Lower leg skin (tissue), 4 donors: ENCODE measurements at regions of chr13 and their contacts with region 1.

Region 1: DNA sequence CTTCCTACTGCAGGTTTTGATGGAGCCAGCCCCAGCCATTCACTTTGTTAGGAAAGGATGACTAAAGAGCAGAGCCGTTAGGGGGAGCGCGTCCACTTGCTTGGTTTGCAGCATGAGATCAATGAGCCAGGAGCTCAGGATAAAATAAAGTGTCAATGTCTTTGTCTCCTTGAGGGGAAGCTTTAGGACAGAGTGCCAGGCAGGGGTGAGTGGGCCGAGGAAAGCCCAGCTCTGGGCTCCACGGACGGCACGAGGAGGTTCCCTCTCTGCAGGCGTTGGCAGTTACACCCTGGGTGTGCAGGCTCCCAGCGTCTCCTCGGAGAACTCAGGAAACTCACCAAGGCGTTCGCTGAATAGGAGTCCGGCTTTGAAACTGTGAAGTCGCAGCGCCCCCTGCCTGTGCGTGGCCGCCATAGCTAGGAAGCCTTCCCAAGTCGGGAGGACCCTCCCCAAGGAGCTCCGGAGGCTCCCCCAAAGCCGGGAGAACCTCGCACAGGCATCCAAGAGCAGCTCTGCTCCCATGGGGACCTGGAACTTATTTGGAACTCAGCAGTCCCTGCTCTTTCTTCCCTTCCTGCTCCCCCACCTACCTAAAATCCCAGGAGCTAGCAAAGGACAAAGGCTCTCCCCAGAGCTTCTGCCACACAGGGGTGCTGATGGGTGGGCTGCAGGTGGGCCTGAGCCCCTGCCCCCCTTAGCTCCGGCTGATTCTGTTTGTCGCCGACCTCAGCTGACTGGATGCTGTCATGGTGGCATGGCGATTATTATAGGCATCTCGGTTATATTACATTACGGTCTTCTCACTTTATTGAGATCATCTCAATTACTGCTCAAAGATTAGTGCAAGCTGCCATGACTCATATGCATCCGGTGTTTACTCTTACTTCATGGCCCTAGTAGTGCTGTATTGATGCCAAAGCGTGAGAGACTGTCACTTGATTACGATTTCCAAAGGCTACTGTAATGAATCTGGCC is 34.4 kb downstream of the GSX1 start:
- DNase-seq: peak; percentile 73 to 96
- H3K4me3 ChIP-seq: no peak overlapping the region
- CTCF ChIP-seq: peak in 2 of 3 donors; percentile 74 to 84
- POLR2A ChIP-seq: no peak

Region 2: GRCh38 chr13:27182844-27183497 is 643.7 kb before region 1 on chr13:
- intact Hi-C with region 1: no loop called
- DNase-seq: peak in 1 of 2 donors; percentile 48
- H3K4me3 ChIP-seq: no peak overlapping the region
- CTCF ChIP-seq: no peak
- POLR2A ChIP-seq: no peak

Region 3: DNA sequence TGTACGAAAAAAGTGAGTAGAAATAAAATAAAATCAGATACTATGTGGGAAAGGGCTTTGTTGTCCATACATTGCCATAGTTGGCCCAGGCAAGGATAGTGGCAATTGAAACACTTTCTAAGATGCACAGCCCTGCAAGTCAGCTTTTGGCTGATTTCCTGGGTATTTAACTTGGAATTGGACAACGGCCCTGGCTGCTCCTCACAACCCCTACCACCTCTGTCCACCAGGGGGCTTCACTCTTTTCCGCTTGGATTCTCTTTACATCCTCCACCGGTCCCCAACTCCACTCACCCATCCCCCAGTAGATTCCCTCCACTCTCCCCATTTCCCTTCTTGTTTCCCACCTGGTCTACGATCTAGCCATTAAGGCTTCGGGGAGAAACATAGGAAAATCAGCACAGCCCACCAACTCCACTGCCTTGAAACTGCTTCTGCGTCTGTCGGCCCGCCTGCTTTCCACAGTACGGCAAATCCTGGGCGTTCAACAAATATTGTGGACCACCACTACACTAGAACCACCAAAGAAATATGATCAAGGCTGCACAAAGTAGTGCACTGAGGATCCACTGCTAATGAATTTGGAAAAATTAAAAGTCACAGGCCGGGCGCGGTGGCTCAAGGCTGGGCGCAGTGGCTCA is 450.9 kb before region 1 on chr13:
- intact Hi-C with region 1: loop called (anchors 2 kb)
- DNase-seq: peak in 1 of 2 donors; percentile 91
- H3K4me3 ChIP-seq: no peak overlapping the region
- CTCF ChIP-seq: no peak
- POLR2A ChIP-seq: no peak

Region 4: DNA sequence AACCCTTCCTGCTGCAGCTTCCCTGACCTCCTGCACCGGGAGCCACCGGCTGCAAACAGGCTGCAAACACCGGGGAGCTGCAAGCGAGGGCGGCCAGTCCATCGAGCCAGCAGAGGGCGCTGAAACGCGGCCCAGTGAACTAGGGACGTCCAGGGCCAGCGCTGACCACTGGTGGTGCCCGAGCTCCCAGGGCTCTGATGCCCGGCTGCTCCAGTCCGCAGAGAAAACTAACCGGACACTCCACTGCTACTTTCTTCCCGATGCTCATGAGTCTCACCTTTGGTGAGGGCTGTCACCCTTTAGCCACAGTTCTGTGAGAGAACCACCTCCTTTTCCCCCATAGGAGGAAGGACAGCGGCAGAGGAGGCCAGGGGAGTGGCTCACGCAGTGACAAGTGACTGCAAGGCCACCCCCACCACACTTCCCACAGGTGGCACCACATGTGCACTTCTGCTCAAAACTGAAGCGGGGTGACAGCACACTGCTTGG is 293.5 kb before region 1 on chr13:
- intact Hi-C with region 1: loop called (anchors 5 kb)
- DNase-seq: peak; percentile 44 to 95
- H3K4me3 ChIP-seq: no peak overlapping the region
- CTCF ChIP-seq: peak in 1 of 3 donors; percentile 14
- POLR2A ChIP-seq: no peak

Region 5: DNA sequence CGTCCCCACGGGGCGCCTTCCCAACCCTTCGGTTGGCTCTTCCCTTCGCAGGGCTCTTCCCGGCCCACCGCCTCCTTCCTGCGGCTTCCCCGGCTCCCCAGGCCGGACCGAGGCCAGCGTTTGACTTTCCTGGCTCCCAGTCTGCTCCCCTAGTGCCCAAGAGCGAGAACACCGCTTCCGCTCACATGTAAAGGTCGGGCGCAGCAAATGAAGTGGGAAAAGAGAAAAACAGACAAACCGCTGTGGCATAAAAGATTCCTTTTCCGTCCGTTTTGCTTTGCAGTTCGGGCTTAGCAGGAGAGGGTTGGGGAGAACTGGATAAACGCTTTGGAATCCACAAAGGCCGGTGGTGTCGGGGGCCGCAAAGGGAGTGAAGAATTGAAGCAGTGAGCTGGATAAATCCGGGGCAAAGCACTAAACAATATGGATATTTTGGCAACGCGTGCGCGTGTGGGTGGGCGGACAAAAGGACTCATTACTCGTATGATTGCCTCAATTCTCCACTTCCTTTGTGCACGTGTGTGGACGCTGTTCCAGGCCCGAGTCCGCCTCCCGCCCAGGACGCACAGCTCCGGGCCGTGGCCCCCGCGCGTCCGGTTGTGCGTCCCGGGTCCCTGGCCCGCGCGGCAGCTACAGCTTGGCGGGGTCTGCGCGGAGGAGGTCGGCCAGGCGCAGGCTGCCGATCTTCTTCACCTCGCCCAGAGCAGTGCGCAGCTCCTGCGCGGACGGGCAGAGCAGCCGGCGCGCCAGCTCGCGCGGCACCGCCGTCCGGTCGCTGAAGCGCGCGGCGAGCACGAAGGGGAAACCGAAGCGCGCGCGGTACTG is 151.0 kb after region 1 on chr13:
- intact Hi-C with region 1: loop called (anchors 10 kb)
- DNase-seq: peak in 1 of 2 donors; percentile 66
- H3K4me3 ChIP-seq: no peak overlapping the region
- CTCF ChIP-seq: no peak
- POLR2A ChIP-seq: no peak